ENCODE measurements at regions of chr2 and their contacts with region 1.

Region 1: GRCh38 chr2:46364797-46365457 is 67.7 kb downstream of the EPAS1 start:
- DNase-seq: peak in 1 of 5 donors; percentile 39
- ATAC-seq: peak; percentile 15 to 58 (median 39)
- H3K4me3 ChIP-seq: no peak overlapping the region
- H3K27ac ChIP-seq: peak overlapping the region in 3 of 12 donors; percentile 15 to 77 (median 35)
- H3K4me1 ChIP-seq: peaks cover 0 to 56% (median 18%) of the 10 kb centered on the region in 12 donors
- H3K27me3 ChIP-seq: no peaks in the 10 kb centered on the region
- CTCF ChIP-seq: peak; percentile 72 to 92 (median 87)
- POLR2A ChIP-seq: no peak

Region 2: GRCh38 chr2:46010925-46011490 is 353.9 kb before region 1 on chr2:
- intact Hi-C with region 1: loop called (anchors 5 to 10 kb)
- DNase-seq: no peak
- ATAC-seq: peak in 3 of 4 donors; percentile 50 to 68 (median 54)
- H3K4me3 ChIP-seq: no peak overlapping the region
- H3K27ac ChIP-seq: no peak overlapping the region
- H3K4me1 ChIP-seq: peaks cover 0 to 27% (median 12%) of the 10 kb centered on the region in 12 donors
- H3K27me3 ChIP-seq: no peaks in the 10 kb centered on the region
- CTCF ChIP-seq: peak; percentile 44 to 81 (median 72)
- POLR2A ChIP-seq: no peak

Region 3: DNA sequence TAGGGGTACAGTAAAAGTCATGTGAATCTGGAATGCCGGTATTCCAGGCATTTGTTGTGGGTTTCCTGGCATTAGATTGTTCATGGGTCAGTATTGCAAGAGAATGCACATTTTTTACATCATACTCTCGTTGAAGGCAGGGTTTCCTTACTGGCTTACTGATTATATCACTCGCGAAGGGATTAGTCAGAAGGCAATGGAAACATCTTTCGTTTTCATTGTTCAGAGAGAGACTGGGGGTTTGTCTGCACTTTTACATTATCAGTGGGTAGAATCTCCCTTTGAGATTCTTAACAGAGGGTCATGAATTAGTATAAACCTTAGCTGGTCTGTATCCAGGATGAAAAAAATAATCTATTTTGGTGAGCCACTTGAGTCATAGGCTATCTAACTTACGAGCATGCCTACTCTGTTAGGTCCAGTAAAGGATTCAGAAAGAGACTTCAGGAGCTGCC is 297.0 kb before region 1 on chr2:
- intact Hi-C with region 1: loop called in 9 of 10 experiments (anchors 2 to 10 kb)
- DNase-seq: no peak
- ATAC-seq: peak; percentile 32 to 79 (median 66)
- H3K4me3 ChIP-seq: no peak overlapping the region
- H3K27ac ChIP-seq: peak overlapping the region in 11 of 12 donors; percentile 2 to 69 (median 44)
- H3K4me1 ChIP-seq: peaks cover 0 to 42% (median 16%) of the 10 kb centered on the region in 12 donors
- H3K27me3 ChIP-seq: no peaks in the 10 kb centered on the region
- CTCF ChIP-seq: no peak
- POLR2A ChIP-seq: no peak

Region 4: GRCh38 chr2:46230115-46230571 is 134.8 kb before region 1 on chr2:
- intact Hi-C with region 1: loop called in 6 of 10 experiments (anchors 1 to 10 kb)
- DNase-seq: peak in 4 of 5 donors; percentile 35 to 69 (median 61)
- ATAC-seq: peak; percentile 62 to 92 (median 88)
- H3K4me3 ChIP-seq: no peak overlapping the region
- H3K27ac ChIP-seq: peak overlapping the region in 8 of 12 donors; percentile 3 to 67 (median 42)
- H3K4me1 ChIP-seq: peaks cover 0 to 32% (median 14%) of the 10 kb centered on the region in 12 donors
- H3K27me3 ChIP-seq: no peaks in the 10 kb centered on the region
- CTCF ChIP-seq: peak; percentile 16 to 56 (median 39)
- POLR2A ChIP-seq: no peak

Region 5: DNA sequence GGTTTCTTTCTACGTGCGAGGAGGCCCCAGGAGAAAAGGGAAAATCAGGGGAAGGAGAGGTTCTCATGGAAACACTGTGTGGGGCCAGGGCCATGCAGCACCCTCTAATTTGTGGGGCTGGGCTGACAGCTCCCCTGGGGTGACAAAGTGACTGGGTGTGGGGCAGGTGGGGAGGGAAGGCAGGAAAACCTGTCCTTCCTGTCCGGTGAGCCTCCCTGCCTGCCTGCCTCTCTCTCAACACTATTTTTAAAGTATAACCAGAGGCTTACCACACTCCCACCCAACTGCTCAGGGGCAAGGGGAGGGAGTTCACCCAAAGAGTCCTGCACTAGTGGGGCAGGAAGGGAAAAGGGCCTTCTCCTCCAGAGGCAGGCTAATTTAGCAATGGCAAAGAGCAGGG is 78.2 kb before region 1 on chr2:
- intact Hi-C with region 1: no loop called
- DNase-seq: no peak
- ATAC-seq: no peak
- H3K4me3 ChIP-seq: no peak overlapping the region
- H3K27ac ChIP-seq: no peak overlapping the region
- H3K4me1 ChIP-seq: peaks cover 0 to 9% (median 0%) of the 10 kb centered on the region in 12 donors
- H3K27me3 ChIP-seq: no peaks in the 10 kb centered on the region
- CTCF ChIP-seq: no peak
- POLR2A ChIP-seq: no peak

Region 6: DNA sequence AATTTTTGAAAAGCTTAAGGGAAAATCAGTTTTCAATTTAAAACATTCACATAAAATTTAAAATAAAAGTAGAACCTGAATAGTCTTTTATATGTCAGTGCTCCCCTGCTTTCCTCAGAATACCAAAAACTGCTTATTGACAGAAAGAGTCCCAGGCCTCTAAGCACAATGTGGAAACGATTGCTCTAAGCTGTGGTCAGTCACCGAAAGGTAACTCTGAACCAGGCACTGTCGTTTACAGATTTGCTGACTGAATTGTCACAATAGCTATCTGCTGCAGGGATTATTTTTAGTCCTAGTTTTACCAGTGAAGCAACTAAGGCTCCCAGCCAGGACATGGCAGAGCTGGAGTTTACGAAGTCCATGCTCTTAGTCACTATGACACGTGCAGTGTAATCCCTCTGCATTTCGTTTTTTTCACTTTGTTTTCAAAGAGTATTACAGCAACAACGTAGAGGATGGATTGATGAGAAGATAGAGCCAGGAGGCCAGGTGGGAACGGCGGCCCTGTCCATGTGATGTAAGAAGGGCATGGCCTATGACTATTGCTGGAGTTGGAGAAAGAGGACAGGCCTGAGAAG is 86.3 kb after region 1 on chr2:
- intact Hi-C with region 1: loop called in 1 of 10 experiments (anchors 10 kb)
- DNase-seq: peak in 1 of 5 donors; percentile 46
- ATAC-seq: peak; percentile 55 to 82 (median 80)
- H3K4me3 ChIP-seq: no peak overlapping the region
- H3K27ac ChIP-seq: peak overlapping the region in 2 of 12 donors; percentile 0 to 19
- H3K4me1 ChIP-seq: peaks cover 0 to 10% (median 0%) of the 10 kb centered on the region in 12 donors
- H3K27me3 ChIP-seq: no peaks in the 10 kb centered on the region
- CTCF ChIP-seq: no peak
- POLR2A ChIP-seq: no peak